PC-9 (cell line): ENCODE measurements at regions of chr2 and their contacts with region 1.

Region 1: DNA sequence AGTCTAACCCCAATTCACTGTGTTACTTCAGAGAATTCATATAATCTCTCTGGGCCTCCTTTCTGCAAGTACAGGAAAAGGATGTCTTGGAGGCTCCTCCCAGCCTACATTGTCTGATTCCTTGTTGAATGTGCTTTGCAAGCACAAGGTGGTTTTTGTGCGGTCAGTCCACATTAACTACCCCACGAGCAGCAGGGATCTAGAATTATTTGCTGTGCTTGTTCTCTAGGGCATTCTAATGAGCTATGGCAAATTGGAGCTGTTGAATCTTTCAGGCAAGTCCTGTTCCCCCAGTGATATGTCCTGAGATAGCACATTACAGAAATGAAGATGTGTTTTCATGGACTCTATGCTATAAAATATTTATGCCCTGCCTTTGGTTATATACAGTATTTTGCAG is 349.4 kb downstream of the SLC4A3 start:
- DNase-seq: no peak
- H3K4me3 ChIP-seq: no peak overlapping the region
- H3K27ac ChIP-seq: no peak overlapping the region
- H3K4me1 ChIP-seq: no peaks in the 10 kb centered on the region
- H3K27me3 ChIP-seq: no peaks in the 10 kb centered on the region
- CTCF ChIP-seq: no peak

Region 2: GRCh38 chr2:219020604-219021365 is 956.1 kb before region 1 on chr2:
- CTCF ChIA-PET with region 1: no interaction called
- POLR2A ChIA-PET with region 1: interaction called, 10 read pairs
- intact Hi-C with region 1: no loop called
- DNase-seq: no peak
- H3K4me3 ChIP-seq: no peak overlapping the region
- H3K27ac ChIP-seq: no peak overlapping the region
- H3K4me1 ChIP-seq: no peaks in the 10 kb centered on the region
- H3K27me3 ChIP-seq: peaks cover 61% of the 10 kb centered on the region
- CTCF ChIP-seq: no peak